ENCODE measurements at regions of chr22 and their contacts with region 1.

Region 1: GRCh38 chr22:36461669-36462649 is 19.5 kb downstream of the TXN2 start:
- DNase-seq: peak; percentile 61 to 75 (median 66)
- ATAC-seq: peak; percentile 4 to 33 (median 24)
- H3K4me3 ChIP-seq: no peak overlapping the region
- H3K27ac ChIP-seq: peak overlapping the region; percentile 73 to 98 (median 94)
- H3K4me1 ChIP-seq: peaks cover 12 to 78% (median 69%) of the 10 kb centered on the region in 12 donors
- H3K27me3 ChIP-seq: no peaks in the 10 kb centered on the region
- CTCF ChIP-seq: no peak
- POLR2A ChIP-seq: no peak

Region 2: GRCh38 chr22:36325154-36326031 is 136.6 kb before region 1 on chr22:
- intact Hi-C with region 1: loop called in 7 of 10 experiments (anchors 2 to 5 kb)
- DNase-seq: peak in 4 of 5 donors; percentile 60 to 74 (median 67)
- ATAC-seq: peak in 2 of 4 donors; percentile 4
- H3K4me3 ChIP-seq: no peak overlapping the region
- H3K27ac ChIP-seq: peak overlapping the region; percentile 89 to 100 (median 94)
- H3K4me1 ChIP-seq: peaks cover 41 to 100% (median 86%) of the 10 kb centered on the region in 12 donors
- H3K27me3 ChIP-seq: no peaks in the 10 kb centered on the region
- CTCF ChIP-seq: no peak
- POLR2A ChIP-seq: no peak

Region 3: DNA sequence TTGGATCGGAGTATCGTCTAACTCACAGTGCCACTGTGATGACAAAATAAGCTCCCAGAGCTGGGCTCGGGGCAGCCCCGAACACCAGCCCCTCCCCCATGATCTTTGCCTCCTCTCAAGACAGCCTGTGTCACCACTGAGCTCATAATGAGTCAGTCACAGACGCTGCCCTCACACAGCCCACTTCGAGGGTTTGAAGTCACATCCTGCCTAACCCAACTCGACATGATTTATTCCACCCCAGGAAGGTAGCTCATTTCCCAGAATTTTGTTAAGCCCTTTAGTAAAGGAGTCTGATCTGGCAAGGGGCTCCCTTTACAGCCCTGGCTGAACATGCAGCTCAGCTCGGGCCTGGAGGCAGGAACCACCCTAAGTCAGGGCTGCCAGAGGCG is 96.9 kb before region 1 on chr22:
- intact Hi-C with region 1: loop called in 2 of 10 experiments (anchors 5 kb)
- DNase-seq: peak in 2 of 5 donors; percentile 71 to 88
- ATAC-seq: peak in 3 of 4 donors; percentile 68 to 69 (median 69)
- H3K4me3 ChIP-seq: no peak overlapping the region
- H3K27ac ChIP-seq: peak overlapping the region; percentile 43 to 99 (median 88)
- H3K4me1 ChIP-seq: peaks cover 39 to 100% (median 99%) of the 10 kb centered on the region in 12 donors
- H3K27me3 ChIP-seq: no peaks in the 10 kb centered on the region
- CTCF ChIP-seq: no peak
- POLR2A ChIP-seq: no peak

Measured in heart left ventricle (tissue), 16 donors.